T-cell (primary cell): ENCODE measurements at regions of chr14 and their contacts with region 1.

Region 1: GRCh38 chr14:65164068-65164824 is 61.9 kb upstream of the MAX start:
- DNase-seq: peak in 23 of 35 experiments; percentile 5 to 77 (median 23)
- ATAC-seq: peak; percentile 43 to 64 (median 54)
- H3K4me3 ChIP-seq: no peak overlapping the region
- H3K4me3 Mint-ChIP-seq: no peak overlapping the region
- H3K27ac ChIP-seq: no peak overlapping the region
- H3K27ac Mint-ChIP-seq: no peak overlapping the region
- H3K4me1 ChIP-seq: no peaks in the 10 kb centered on the region
- H3K4me1 Mint-ChIP-seq: peaks cover 0 to 6% (median 6%) of the 10 kb centered on the region in 3 donors
- H3K27me3 ChIP-seq: no peaks in the 10 kb centered on the region
- H3K27me3 Mint-ChIP-seq: no peaks in the 10 kb centered on the region

Region 2: GRCh38 chr14:65095619-65096205 is 68.5 kb before region 1 on chr14:
- CTCF ChIA-PET with region 1: no interaction called
- POLR2A ChIA-PET with region 1: no interaction called
- DNase-seq: no peak
- ATAC-seq: no peak
- H3K4me3 ChIP-seq: no peak overlapping the region
- H3K4me3 Mint-ChIP-seq: peak overlapping the region in 2 of 3 donors; percentile 43 to 85
- H3K27ac ChIP-seq: no peak overlapping the region
- H3K27ac Mint-ChIP-seq: peak overlapping the region; percentile 24 to 78
- H3K4me1 ChIP-seq: peaks cover 35 to 45% of the 10 kb centered on the region in 2 experiments
- H3K4me1 Mint-ChIP-seq: peaks cover 89 to 90% (median 90%) of the 10 kb centered on the region in 3 donors
- H3K27me3 ChIP-seq: no peaks in the 10 kb centered on the region
- H3K27me3 Mint-ChIP-seq: no peaks in the 10 kb centered on the region

Region 3: GRCh38 chr14:65281991-65282895 is 118.0 kb after region 1 on chr14:
- CTCF ChIA-PET with region 1: no interaction called
- POLR2A ChIA-PET with region 1: no interaction called
- DNase-seq: peak in 4 of 35 experiments; percentile 10 to 32 (median 22)
- ATAC-seq: peak; percentile 52 to 73 (median 62)
- H3K4me3 ChIP-seq: peak overlapping the region; percentile 28 to 48
- H3K4me3 Mint-ChIP-seq: peak overlapping the region; percentile 66 to 77 (median 70)
- H3K27ac ChIP-seq: peak overlapping the region; percentile 64
- H3K27ac Mint-ChIP-seq: peak overlapping the region; percentile 89 to 90
- H3K4me1 ChIP-seq: peaks cover 26 to 34% of the 10 kb centered on the region in 2 experiments
- H3K4me1 Mint-ChIP-seq: peaks cover 36 to 39% (median 37%) of the 10 kb centered on the region in 3 donors
- H3K27me3 ChIP-seq: no peaks in the 10 kb centered on the region
- H3K27me3 Mint-ChIP-seq: no peaks in the 10 kb centered on the region

Region 4: DNA sequence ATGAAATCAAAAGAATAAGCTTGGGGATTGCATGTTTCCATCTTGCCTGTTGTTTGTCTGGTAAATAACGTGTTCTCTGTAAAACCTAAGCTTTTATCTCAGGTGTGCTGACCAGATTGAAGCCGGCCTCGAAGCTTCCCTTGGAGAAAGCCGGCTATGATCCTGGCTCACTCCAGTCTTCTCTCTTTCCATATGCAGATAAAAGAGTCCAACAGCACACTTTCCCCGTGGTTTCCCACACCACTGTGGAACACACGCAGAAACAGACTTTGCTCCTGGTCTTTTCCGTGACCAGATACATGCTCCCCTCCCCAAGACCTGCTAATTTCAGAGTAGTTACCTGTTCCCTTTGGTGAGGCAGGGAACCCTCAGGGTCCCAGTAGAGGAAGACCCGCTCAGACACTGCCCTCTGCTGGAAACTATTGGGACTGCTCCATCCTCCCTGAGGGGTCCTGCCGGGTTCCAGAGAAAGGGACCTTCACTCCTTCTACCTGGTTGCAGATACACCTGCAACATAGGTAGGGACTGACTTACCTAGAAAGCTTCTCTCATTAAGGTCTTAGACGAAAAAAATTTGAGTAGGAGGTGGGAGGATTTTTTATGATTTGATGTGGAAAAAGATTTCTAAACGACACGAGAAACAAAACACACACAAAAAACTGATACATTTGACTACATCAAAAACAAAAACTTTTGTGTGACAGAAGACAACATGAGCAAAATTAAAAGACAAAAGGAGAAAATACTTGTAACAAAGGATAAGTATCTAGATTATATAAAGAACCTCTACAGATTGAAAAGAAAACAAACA is 906.5 kb after region 1 on chr14:
- CTCF ChIA-PET with region 1: interaction called, 6 to 19 read pairs
- POLR2A ChIA-PET with region 1: no interaction called
- DNase-seq: peak; percentile 8 to 79 (median 61)
- ATAC-seq: peak; percentile 73 to 86 (median 83)
- H3K4me3 ChIP-seq: no peak overlapping the region
- H3K4me3 Mint-ChIP-seq: no peak overlapping the region
- H3K27ac ChIP-seq: no peak overlapping the region
- H3K27ac Mint-ChIP-seq: no peak overlapping the region
- H3K4me1 ChIP-seq: no peaks in the 10 kb centered on the region
- H3K4me1 Mint-ChIP-seq: peaks cover 2 to 7% (median 5%) of the 10 kb centered on the region in 3 donors
- H3K27me3 ChIP-seq: peaks cover 0 to 4% of the 10 kb centered on the region in 2 experiments
- H3K27me3 Mint-ChIP-seq: peaks cover 4 to 7% of the 10 kb centered on the region in 2 donors